ENCODE measurements at regions of chr16 and their contacts with region 1.

Region 1: GRCh38 chr16:2003827-2004641 is 5.6 kb downstream of the ZNF598 start:
- DNase-seq: peak; percentile 93
- H3K4me3 Mint-ChIP-seq: no peak overlapping the region
- H3K27ac Mint-ChIP-seq: no peak overlapping the region
- H3K4me1 Mint-ChIP-seq: peaks cover 43% of the 10 kb centered on the region
- H3K27me3 Mint-ChIP-seq: no peaks in the 10 kb centered on the region

Region 2: DNA sequence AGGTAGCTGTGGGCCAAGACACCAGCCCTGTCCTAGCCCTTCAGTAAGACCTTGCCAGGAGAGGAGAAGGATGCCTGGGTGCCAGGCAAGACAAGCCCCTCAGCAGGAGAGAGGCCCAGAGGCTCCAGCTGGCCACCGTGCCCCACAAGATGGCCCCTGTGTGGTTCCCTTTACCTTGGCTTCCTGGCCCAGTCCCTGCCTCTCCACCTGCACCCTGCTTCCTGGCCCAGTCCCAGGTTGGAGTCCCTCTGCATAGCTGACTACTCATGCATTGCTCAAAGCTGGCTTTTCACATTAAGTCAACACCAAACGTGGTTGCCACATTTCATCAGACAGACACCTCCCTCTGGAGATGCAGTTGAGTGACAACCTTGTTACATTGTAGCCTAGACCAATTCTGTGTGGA is 10.3 kb before region 1 on chr16:
- CTCF ChIA-PET with region 1: interaction called, 18 read pairs
- DNase-seq: no peak
- H3K4me3 Mint-ChIP-seq: no peak overlapping the region
- H3K27ac Mint-ChIP-seq: peak overlapping the region; percentile 69
- H3K4me1 Mint-ChIP-seq: peaks cover 23% of the 10 kb centered on the region
- H3K27me3 Mint-ChIP-seq: peaks cover 38% of the 10 kb centered on the region

Region 3: DNA sequence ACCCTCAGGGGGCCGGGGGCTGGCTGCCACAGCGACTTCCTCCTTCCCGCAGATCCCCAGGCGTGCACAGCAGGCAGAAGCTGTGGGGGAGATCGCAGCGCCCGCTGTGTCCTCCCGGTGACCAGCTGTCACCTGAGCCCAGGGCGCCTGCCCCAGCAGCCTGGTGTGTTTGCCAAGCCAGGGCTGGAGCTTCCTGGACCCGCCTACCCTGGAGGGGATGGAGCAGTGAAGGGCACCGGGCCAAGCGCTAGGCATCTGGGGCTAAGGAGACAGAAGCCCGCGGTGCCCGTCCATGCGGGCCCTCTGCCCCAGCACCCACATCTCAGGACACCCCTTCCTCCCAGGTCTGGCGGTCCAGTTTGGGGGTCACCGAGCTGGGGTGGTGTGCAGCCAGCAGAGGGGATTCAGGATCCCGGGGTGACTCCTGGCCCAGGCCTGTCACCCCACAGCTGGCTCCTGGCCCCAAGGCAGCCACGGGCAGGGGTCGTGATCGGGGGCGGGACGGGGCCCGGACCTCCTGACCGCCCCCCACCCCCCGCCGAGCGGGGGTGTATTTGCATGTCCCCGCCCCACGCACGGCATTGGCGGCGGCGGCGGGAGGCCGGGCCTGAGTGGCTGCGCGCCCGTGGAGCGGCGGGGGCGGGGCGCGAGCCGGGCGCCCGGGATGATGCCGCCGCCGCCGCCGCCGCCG is 144.1 kb after region 1 on chr16 and contains the start of gene RAB26:
- CTCF ChIA-PET with region 1: interaction called, 10 read pairs
- DNase-seq: peak; percentile 75
- H3K4me3 Mint-ChIP-seq: peak within 1 kb of the TSS; percentile 33
- H3K27ac Mint-ChIP-seq: no peak within 1 kb of the TSS
- H3K4me1 Mint-ChIP-seq: peaks cover 23% of the 10 kb centered on the region
- H3K27me3 Mint-ChIP-seq: peaks cover 53% of the 10 kb centered on the region

Region 4: GRCh38 chr16:2296661-2297505 is 292.8 kb after region 1 on chr16:
- CTCF ChIA-PET with region 1: no interaction called
- DNase-seq: no peak
- H3K4me3 Mint-ChIP-seq: no peak overlapping the region
- H3K27ac Mint-ChIP-seq: no peak overlapping the region
- H3K4me1 Mint-ChIP-seq: peaks cover 10% of the 10 kb centered on the region
- H3K27me3 Mint-ChIP-seq: no peaks in the 10 kb centered on the region